ENCODE measurements at regions of chr1 and their contacts with region 1.

Region 1: DNA sequence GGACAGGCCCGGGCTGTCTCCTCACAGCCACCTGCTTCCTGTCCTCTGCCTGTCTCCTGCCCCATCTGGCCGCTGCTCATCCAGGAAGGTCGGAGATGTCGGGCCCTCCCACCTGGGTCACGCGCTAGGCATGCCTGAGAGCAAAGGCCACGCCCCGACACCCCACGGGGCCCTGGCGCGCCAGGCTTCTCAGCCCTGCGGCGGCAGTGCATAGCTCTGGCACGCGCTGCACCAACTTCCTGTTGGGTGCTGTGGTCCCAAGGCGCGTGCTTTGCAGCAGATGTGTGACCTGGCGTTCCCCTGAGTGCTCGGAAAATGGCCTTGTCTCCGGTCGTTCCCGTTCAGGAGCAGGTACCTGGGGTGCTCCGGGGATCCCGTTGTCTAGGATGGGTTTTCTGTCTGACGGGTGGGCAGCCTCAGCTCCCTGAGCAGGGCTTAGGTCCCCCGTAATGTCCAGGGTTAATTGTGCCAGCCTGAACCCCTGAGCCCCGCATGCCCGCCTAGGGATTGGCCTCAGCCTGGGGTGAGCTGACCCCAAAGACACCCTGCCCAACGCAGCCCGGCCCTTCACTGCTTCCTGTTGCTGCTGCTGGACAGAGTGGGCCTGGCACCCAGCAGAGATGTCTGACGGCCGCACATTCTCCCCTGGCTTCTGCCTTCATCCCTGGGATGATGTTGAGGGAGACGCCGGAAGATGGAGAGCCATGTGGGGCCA is 19.4 kb upstream of the KCNAB2 start:
- DNase-seq: peak; percentile 96
- H3K4me3 Mint-ChIP-seq: peak overlapping the region; percentile 96
- H3K27ac Mint-ChIP-seq: peak overlapping the region; percentile 99
- H3K4me1 Mint-ChIP-seq: peaks cover 57% of the 10 kb centered on the region
- H3K27me3 Mint-ChIP-seq: no peaks in the 10 kb centered on the region

Region 2: GRCh38 chr1:5954964-5955363 is 71.3 kb before region 1 on chr1:
- CTCF ChIA-PET with region 1: interaction called, 3 read pairs
- POLR2A ChIA-PET with region 1: interaction called, 15 read pairs
- DNase-seq: no peak
- H3K4me3 Mint-ChIP-seq: peak overlapping the region; percentile 38
- H3K27ac Mint-ChIP-seq: peak overlapping the region; percentile 85
- H3K4me1 Mint-ChIP-seq: peaks cover 60% of the 10 kb centered on the region
- H3K27me3 Mint-ChIP-seq: no peaks in the 10 kb centered on the region

Region 3: DNA sequence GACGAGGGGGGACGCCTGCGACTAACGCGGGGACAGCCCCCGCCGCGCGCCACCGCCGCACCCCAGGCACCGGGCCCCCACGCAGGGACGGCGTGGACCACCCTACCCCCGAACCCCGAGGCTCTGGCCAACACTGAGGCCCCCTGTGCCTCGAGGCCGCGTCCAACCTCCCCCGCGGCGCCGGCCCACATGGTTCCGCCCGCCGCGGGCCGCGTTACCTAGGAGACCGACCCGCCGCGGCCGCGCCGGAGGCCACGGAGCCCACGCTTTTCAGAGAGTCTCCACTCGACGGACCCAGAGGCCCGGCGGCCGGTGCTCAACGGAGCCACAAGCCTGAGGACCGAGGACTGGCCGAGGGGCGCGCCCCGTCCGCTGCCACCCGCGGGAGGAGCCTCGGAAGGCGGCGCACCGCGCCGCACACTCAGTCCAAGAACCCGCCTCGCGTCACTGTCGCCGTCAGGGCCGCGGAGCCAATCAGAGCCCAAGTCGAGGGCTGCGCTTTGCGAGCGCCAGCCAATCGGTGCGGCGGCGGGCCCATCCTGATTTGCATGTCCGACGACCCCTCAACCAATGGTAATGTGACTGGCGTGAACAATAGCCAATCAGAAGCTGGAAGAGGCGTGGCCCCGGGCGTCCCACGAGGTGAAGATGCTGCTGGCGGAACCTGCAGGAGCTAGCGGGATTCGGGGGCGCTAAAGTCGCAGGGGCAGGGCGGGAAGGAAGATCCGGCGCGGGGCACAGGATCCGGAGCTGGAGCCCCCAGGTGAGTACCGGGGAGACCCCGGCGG is 34.0 kb before region 1 on chr1 and contains the start of gene NPHP4:
- CTCF ChIA-PET with region 1: interaction called, 9 read pairs
- POLR2A ChIA-PET with region 1: interaction called, 136 read pairs
- DNase-seq: peak; percentile 100
- H3K4me3 Mint-ChIP-seq: peak within 1 kb of the TSS; percentile 99
- H3K27ac Mint-ChIP-seq: peak within 1 kb of the TSS; percentile 99
- H3K4me1 Mint-ChIP-seq: peaks cover 35% of the 10 kb centered on the region
- H3K27me3 Mint-ChIP-seq: no peaks in the 10 kb centered on the region
- total RNA-seq, gene NPHP4: 18.1 to 19.1 TPM

Region 4: DNA sequence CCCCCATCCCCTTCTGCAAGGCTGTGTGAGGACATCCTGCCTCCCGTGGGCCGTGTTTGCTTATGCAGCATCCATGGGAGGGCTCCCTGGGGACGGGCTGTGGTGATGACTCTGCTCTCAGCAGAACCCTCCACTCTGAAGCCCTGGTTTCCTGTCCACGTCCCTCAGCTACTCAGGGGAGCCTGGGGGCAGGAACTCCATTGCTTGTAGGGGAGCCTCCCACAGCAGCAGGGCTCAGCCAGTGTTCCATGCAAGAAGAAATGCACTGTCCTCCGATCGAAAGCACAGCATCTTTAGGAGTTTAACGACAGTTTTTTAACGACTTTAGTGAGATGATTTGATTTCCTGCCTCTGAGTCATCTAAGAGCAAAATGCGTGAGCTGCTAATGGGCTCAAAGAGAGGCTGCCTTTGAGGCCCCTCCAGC is 11.1 kb after region 1 on chr1:
- CTCF ChIA-PET with region 1: interaction called, 7 read pairs
- POLR2A ChIA-PET with region 1: interaction called, 13 read pairs
- DNase-seq: peak; percentile 46
- H3K4me3 Mint-ChIP-seq: peak overlapping the region; percentile 7
- H3K27ac Mint-ChIP-seq: peak overlapping the region; percentile 73
- H3K4me1 Mint-ChIP-seq: peaks cover 65% of the 10 kb centered on the region
- H3K27me3 Mint-ChIP-seq: no peaks in the 10 kb centered on the region

Measured in activated CD4-positive, alpha-beta memory T cell treated with anti-CD3 and anti-CD28 coated beads, Interleukin-2, amount 10 ng/mL, durations not matched to agents 7 days and 5 days (primary cell).